ENCODE measurements at regions of chr17 and their contacts with region 1.

Region 1: DNA sequence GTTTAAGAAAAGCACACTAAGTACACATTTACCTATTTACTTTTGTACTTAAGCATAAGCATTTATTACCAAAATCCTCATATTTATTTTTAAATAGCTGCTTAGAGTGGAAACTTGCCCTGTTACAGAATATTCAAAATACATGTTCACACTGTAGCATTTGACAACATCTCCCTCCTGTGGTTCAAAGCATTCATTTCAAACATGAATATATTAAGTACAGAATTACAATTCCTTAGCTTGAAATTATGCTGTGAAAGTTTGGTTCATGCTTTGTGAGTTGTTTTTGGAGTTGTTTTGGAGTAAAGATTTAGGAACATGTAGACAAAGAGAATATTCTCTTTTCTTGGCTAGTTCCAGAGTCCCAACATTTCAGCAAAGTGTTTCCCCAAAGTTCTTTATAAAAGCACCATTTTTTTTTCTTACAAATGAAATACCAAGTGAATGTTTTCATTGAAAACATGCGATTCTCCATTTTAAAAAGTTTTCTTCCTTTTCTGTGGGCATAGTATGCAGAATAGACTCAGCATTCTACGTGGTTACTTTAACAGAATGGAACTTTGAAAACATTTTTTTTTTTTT is 33.2 kb downstream of the TUBD1 start:
- DNase-seq: peak; percentile 78
- ATAC-seq: peak; percentile 73
- H3K4me3 ChIP-seq: no peak overlapping the region
- H3K27ac ChIP-seq: peak overlapping the region; percentile 43; the same call in 1 of the 2 replicates
- H3K4me1 ChIP-seq: peaks cover 5% of the 10 kb centered on the region; the same call in 1 of the 2 replicates
- H3K27me3 ChIP-seq: no peaks in the 10 kb centered on the region
- CTCF ChIP-seq: peak; percentile 83
- POLR2A ChIP-seq: 0 out of 2 replicates have a peak, but pooled peaks have one; percentile 24
- RAD21 ChIP-seq: peak; percentile 91

Region 2: GRCh38 chr17:59506894-59507726 is 352.4 kb before region 1 on chr17:
- CTCF ChIA-PET with region 1: no interaction called
- POLR2A ChIA-PET with region 1: no interaction called
- dilution Hi-C with region 1: no loop called
- in situ Hi-C with region 1: no loop called
- intact Hi-C with region 1: no loop called
- DNase-seq: peak; percentile 8
- ATAC-seq: no peak
- H3K4me3 ChIP-seq: no peak overlapping the region
- H3K27ac ChIP-seq: no peak overlapping the region
- H3K4me1 ChIP-seq: peaks cover 3% of the 10 kb centered on the region; the same call in 1 of the 2 replicates
- H3K27me3 ChIP-seq: peaks cover 1% of the 10 kb centered on the region
- CTCF ChIP-seq: no peak
- POLR2A ChIP-seq: no peak
- RAD21 ChIP-seq: no peak

Region 3: GRCh38 chr17:59619293-59620063 is 240.1 kb before region 1 on chr17 and contains the start of gene CLTC:
- CTCF ChIA-PET with region 1: interaction called, 3 read pairs
- POLR2A ChIA-PET with region 1: no interaction called
- dilution Hi-C with region 1: no loop called
- in situ Hi-C with region 1: no loop called
- intact Hi-C with region 1: loop called (anchors 1 kb)
- DNase-seq: peak; percentile 98
- ATAC-seq: peak; percentile 83
- H3K4me3 ChIP-seq: peak within 1 kb of the TSS; percentile 61
- H3K27ac ChIP-seq: peak within 1 kb of the TSS; percentile 93
- H3K4me1 ChIP-seq: peaks cover 1% of the 10 kb centered on the region; the same call in 1 of the 2 replicates
- H3K27me3 ChIP-seq: no peaks in the 10 kb centered on the region
- CTCF ChIP-seq: no peak
- POLR2A ChIP-seq: peak; percentile 95
- RAD21 ChIP-seq: 0 out of 2 replicates have a peak, but pooled peaks have one; percentile 7
- total RNA-seq, gene CLTC: 576 and 641 TPM in 2 replicates

Region 4: DNA sequence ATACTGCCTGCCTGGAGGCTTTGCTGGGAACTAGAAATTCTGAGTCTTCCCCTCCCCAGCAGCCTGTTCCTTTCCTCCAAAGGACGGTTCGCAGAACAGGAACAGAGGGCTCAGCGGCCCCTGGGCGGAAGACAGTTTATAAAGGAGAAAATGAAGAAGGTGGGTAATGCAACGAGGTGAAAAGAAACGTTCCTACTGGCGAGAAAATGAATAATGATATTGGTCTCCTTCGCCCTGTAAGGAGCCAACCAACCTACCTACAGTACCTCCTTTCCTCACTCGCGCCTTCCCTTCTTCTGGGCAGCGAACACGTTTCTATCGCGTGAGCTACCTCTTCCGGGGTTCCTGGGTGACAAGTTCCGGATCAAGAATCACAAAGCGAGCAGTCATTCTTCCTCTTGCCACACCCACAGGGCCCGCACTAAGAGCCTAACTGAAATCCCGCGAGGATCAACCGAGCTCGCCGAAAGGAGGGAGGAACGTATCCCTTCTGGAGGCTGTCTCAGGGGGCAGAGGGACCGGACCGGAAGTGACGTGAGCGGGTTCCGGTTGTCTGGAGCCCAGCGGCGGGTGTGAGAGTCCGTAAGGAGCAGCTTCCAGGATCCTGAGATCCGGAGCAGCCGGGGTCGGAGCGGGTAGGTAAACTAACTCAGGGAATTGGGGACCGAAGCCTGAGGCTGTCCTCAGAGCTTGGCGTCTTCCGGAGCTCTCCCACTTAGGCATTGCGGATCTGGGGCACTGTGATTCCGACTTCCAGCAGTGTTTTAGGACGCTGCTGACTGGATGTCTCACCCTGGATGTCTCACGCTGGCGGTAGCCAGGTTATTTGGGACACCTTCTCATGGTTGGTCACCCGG is 152.2 kb before region 1 on chr17 and contains the starts of genes PTRH2 and VMP1:
- CTCF ChIA-PET with region 1: no interaction called
- POLR2A ChIA-PET with region 1: no interaction called
- dilution Hi-C with region 1: no loop called
- in situ Hi-C with region 1: no loop called
- intact Hi-C with region 1: loop called (anchors 2 kb)
- DNase-seq: peak; percentile 100
- ATAC-seq: peak; percentile 97
- H3K4me3 ChIP-seq: peak within 1 kb of the TSS; percentile 68
- H3K27ac ChIP-seq: peak within 1 kb of the TSS; percentile 81
- H3K4me1 ChIP-seq: no peaks in the 10 kb centered on the region
- H3K27me3 ChIP-seq: no peaks in the 10 kb centered on the region
- CTCF ChIP-seq: no peak
- POLR2A ChIP-seq: peak; percentile 96
- RAD21 ChIP-seq: no peak
- total RNA-seq, gene PTRH2: 24.9 and 41.7 TPM in 2 replicates
- total RNA-seq, gene VMP1: 197 and 272 TPM in 2 replicates

Region 5: GRCh38 chr17:59746849-59747445 is 112.6 kb before region 1 on chr17:
- CTCF ChIA-PET with region 1: interaction called, 6 read pairs
- POLR2A ChIA-PET with region 1: interaction called, 8 read pairs
- dilution Hi-C with region 1: no loop called
- in situ Hi-C with region 1: no loop called
- intact Hi-C with region 1: loop called (anchors 1 kb)
- DNase-seq: peak; percentile 71
- ATAC-seq: peak; percentile 88
- H3K4me3 ChIP-seq: no peak overlapping the region
- H3K27ac ChIP-seq: peak overlapping the region; percentile 20; the same call in 1 of the 2 replicates
- H3K4me1 ChIP-seq: peaks cover 3% of the 10 kb centered on the region
- H3K27me3 ChIP-seq: no peaks in the 10 kb centered on the region
- CTCF ChIP-seq: peak; percentile 79
- POLR2A ChIP-seq: no peak
- RAD21 ChIP-seq: peak; percentile 81

Region 6: GRCh38 chr17:59753522-59754467 is 105.7 kb before region 1 on chr17:
- CTCF ChIA-PET with region 1: interaction called, 6 read pairs
- POLR2A ChIA-PET with region 1: interaction called, 4 read pairs
- dilution Hi-C with region 1: no loop called
- in situ Hi-C with region 1: no loop called
- intact Hi-C with region 1: loop called (anchors 1 kb)
- DNase-seq: peak; percentile 93
- ATAC-seq: peak; percentile 74
- H3K4me3 ChIP-seq: no peak overlapping the region
- H3K27ac ChIP-seq: peak overlapping the region; percentile 78; the same call in 1 of the 2 replicates
- H3K4me1 ChIP-seq: peaks cover 14% of the 10 kb centered on the region
- H3K27me3 ChIP-seq: no peaks in the 10 kb centered on the region
- CTCF ChIP-seq: peak; percentile 81
- POLR2A ChIP-seq: peak; percentile 40; the same call in 1 of the 2 replicates
- RAD21 ChIP-seq: peak; percentile 94

Region 7: GRCh38 chr17:59786536-59787319 is 72.8 kb before region 1 on chr17:
- CTCF ChIA-PET with region 1: no interaction called
- POLR2A ChIA-PET with region 1: no interaction called
- dilution Hi-C with region 1: no loop called
- in situ Hi-C with region 1: no loop called
- intact Hi-C with region 1: no loop called
- DNase-seq: peak; percentile 100
- ATAC-seq: peak; percentile 89
- H3K4me3 ChIP-seq: peak overlapping the region; percentile 9; the same call in 1 of the 2 replicates
- H3K27ac ChIP-seq: peak overlapping the region; percentile 93
- H3K4me1 ChIP-seq: peaks cover 16% of the 10 kb centered on the region
- H3K27me3 ChIP-seq: no peaks in the 10 kb centered on the region
- CTCF ChIP-seq: no peak
- POLR2A ChIP-seq: 0 out of 2 replicates have a peak, but pooled peaks have one; percentile 24
- RAD21 ChIP-seq: peak; percentile 23

Region 8: DNA sequence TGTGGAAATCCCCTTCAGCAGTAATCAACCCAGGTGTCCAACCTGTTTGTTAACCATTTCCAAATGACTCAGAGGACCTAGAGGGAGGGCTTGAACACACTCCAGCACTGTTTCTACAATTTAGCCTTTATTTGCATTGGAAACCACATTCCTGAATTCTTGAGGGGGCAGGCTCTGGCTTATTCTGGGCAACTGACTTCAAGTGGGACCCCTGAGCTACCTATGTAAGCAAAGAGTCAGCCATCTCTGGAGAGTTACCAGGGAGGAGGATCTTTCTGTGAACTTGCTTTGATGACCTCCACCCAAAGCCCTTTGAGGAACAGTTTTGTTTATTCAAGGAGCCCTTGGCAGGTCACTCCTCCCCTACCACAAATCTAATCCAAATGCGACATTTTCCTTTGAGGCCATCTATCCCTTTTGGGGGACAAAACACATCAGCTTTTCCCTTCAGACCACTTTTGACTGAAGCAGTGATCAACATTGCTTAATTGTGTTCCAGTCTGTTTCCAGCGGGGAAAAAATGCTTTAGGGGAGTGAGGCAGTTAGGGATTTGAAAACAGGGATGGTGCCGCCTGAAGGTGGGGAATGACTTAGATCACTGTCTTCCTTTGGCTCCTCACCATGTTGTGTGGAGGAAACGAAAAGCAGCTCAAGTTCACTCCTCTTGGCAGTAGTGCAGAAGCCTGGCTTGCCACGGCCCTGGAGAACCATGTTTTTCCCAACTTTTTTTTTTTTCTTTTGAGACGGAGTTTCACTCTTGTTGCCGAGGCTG is 13.0 kb before region 1 on chr17:
- CTCF ChIA-PET with region 1: interaction called, 6 read pairs
- POLR2A ChIA-PET with region 1: interaction called, 8 read pairs
- dilution Hi-C with region 1: no loop called
- in situ Hi-C with region 1: no loop called
- intact Hi-C with region 1: loop called (anchors 1 kb)
- DNase-seq: peak; percentile 94
- ATAC-seq: no peak
- H3K4me3 ChIP-seq: no peak overlapping the region
- H3K27ac ChIP-seq: peak overlapping the region; percentile 90
- H3K4me1 ChIP-seq: peaks cover 16% of the 10 kb centered on the region
- H3K27me3 ChIP-seq: no peaks in the 10 kb centered on the region
- CTCF ChIP-seq: no peak
- POLR2A ChIP-seq: peak; percentile 63
- RAD21 ChIP-seq: no peak

Region 9: GRCh38 chr17:59884861-59885260 is 25.3 kb after region 1 on chr17:
- CTCF ChIA-PET with region 1: no interaction called
- POLR2A ChIA-PET with region 1: no interaction called
- dilution Hi-C with region 1: no loop called
- in situ Hi-C with region 1: no loop called
- intact Hi-C with region 1: no loop called
- DNase-seq: no peak
- ATAC-seq: no peak
- H3K4me3 ChIP-seq: no peak overlapping the region
- H3K27ac ChIP-seq: no peak overlapping the region
- H3K4me1 ChIP-seq: no peaks in the 10 kb centered on the region
- H3K27me3 ChIP-seq: no peaks in the 10 kb centered on the region
- CTCF ChIP-seq: no peak
- POLR2A ChIP-seq: no peak
- RAD21 ChIP-seq: no peak